ENCODE measurements at regions of chr5 and their contacts with region 1.

Region 1: GRCh38 chr5:102778478-102778877 is 23.4 kb downstream of the PAM start:
- DNase-seq: no peak
- ATAC-seq: no peak
- H3K4me3 ChIP-seq: no peak overlapping the region
- H3K4me3 Mint-ChIP-seq: no peak overlapping the region
- H3K27ac ChIP-seq: no peak overlapping the region
- H3K27ac Mint-ChIP-seq: no peak overlapping the region
- H3K4me1 ChIP-seq: peaks cover 9% of the 10 kb centered on the region
- H3K4me1 Mint-ChIP-seq: peaks cover 22% of the 10 kb centered on the region
- H3K27me3 ChIP-seq: no peaks in the 10 kb centered on the region
- H3K27me3 Mint-ChIP-seq: no peaks in the 10 kb centered on the region
- CTCF ChIP-seq: no peak

Region 2: DNA sequence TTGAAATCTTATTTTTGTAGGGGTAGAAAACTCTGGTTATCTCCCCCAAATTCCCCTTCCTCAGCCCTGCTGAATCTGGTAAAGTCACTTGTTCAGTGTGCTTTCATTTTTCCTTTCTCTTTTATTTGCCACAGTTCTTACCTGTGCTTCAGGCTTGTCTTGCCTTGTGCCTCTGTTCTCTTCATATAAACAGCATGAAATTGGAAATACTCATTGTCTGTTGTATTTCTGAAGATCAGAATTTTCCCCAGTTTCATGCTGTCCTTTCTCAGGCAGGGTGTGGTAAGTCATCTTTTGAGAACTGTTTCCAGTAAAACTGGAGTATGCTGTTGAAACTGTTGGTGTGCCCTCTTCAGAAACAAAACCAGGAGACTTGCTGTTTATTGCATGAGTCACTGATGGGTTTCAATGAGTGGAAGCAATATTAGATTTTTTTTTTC is 16.4 kb before region 1 on chr5:
- CTCF ChIA-PET with region 1: interaction called, 9 read pairs
- POLR2A ChIA-PET with region 1: interaction called, 3 read pairs
- intact Hi-C with region 1: loop called in 1 of 2 experiments (anchors 2 kb)
- DNase-seq: peak in 1 of 9 experiments; percentile 50
- ATAC-seq: no peak
- H3K4me3 ChIP-seq: peak overlapping the region in 1 of 2 experiments; percentile 1
- H3K4me3 Mint-ChIP-seq: peak overlapping the region; percentile 63
- H3K27ac ChIP-seq: peak overlapping the region in 1 of 2 experiments; percentile 45
- H3K27ac Mint-ChIP-seq: peak overlapping the region; percentile 10
- H3K4me1 ChIP-seq: peaks cover 14% of the 10 kb centered on the region
- H3K4me1 Mint-ChIP-seq: peaks cover 69% of the 10 kb centered on the region
- H3K27me3 ChIP-seq: no peaks in the 10 kb centered on the region
- H3K27me3 Mint-ChIP-seq: no peaks in the 10 kb centered on the region
- CTCF ChIP-seq: no peak

Region 3: GRCh38 chr5:102799017-102799416 is 20.5 kb after region 1 on chr5:
- CTCF ChIA-PET with region 1: interaction called, 12 read pairs
- POLR2A ChIA-PET with region 1: no interaction called
- intact Hi-C with region 1: no loop called
- DNase-seq: no peak
- ATAC-seq: no peak
- H3K4me3 ChIP-seq: no peak overlapping the region
- H3K4me3 Mint-ChIP-seq: no peak overlapping the region
- H3K27ac ChIP-seq: no peak overlapping the region
- H3K27ac Mint-ChIP-seq: no peak overlapping the region
- H3K4me1 ChIP-seq: peaks cover 19% of the 10 kb centered on the region
- H3K4me1 Mint-ChIP-seq: peaks cover 50% of the 10 kb centered on the region
- H3K27me3 ChIP-seq: no peaks in the 10 kb centered on the region
- H3K27me3 Mint-ChIP-seq: no peaks in the 10 kb centered on the region
- CTCF ChIP-seq: no peak

Region 4: DNA sequence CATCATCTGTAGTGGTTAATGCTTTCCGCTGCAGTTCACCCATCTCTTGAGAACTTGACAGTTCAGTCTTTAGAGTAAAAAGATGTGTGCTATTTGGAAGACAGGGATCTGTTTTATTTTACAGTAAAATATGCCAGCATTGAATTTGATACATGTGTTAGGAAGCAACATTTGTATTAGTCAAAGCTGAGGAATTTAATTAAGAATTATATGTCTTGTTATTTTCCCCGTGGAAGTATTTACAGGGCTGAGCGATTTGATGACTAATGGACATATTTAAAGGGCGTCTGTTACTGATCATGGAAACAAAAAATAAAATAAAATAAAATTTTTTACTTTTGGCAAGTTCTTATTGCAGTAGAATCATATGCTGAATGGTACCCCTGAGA is 77.9 kb after region 1 on chr5:
- CTCF ChIA-PET with region 1: no interaction called
- POLR2A ChIA-PET with region 1: no interaction called
- intact Hi-C with region 1: no loop called
- DNase-seq: no peak
- ATAC-seq: no peak
- H3K4me3 ChIP-seq: no peak overlapping the region
- H3K4me3 Mint-ChIP-seq: no peak overlapping the region
- H3K27ac ChIP-seq: peak overlapping the region in 1 of 2 experiments; percentile 54
- H3K27ac Mint-ChIP-seq: no peak overlapping the region
- H3K4me1 ChIP-seq: peaks cover 8% of the 10 kb centered on the region
- H3K4me1 Mint-ChIP-seq: peaks cover 26% of the 10 kb centered on the region
- H3K27me3 ChIP-seq: no peaks in the 10 kb centered on the region
- H3K27me3 Mint-ChIP-seq: no peaks in the 10 kb centered on the region
- CTCF ChIP-seq: no peak

Region 5: GRCh38 chr5:102971697-102972293 is 193.3 kb after region 1 on chr5:
- CTCF ChIA-PET with region 1: interaction called, 10 read pairs
- POLR2A ChIA-PET with region 1: no interaction called
- intact Hi-C with region 1: loop called (anchors 2 to 5 kb)
- DNase-seq: peak in 2 of 9 experiments; percentile 22 to 40
- ATAC-seq: no peak
- H3K4me3 ChIP-seq: no peak overlapping the region
- H3K4me3 Mint-ChIP-seq: no peak overlapping the region
- H3K27ac ChIP-seq: no peak overlapping the region
- H3K27ac Mint-ChIP-seq: no peak overlapping the region
- H3K4me1 ChIP-seq: no peaks in the 10 kb centered on the region
- H3K4me1 Mint-ChIP-seq: no peaks in the 10 kb centered on the region
- H3K27me3 ChIP-seq: no peaks in the 10 kb centered on the region
- H3K27me3 Mint-ChIP-seq: no peaks in the 10 kb centered on the region
- CTCF ChIP-seq: no peak

Region 6: DNA sequence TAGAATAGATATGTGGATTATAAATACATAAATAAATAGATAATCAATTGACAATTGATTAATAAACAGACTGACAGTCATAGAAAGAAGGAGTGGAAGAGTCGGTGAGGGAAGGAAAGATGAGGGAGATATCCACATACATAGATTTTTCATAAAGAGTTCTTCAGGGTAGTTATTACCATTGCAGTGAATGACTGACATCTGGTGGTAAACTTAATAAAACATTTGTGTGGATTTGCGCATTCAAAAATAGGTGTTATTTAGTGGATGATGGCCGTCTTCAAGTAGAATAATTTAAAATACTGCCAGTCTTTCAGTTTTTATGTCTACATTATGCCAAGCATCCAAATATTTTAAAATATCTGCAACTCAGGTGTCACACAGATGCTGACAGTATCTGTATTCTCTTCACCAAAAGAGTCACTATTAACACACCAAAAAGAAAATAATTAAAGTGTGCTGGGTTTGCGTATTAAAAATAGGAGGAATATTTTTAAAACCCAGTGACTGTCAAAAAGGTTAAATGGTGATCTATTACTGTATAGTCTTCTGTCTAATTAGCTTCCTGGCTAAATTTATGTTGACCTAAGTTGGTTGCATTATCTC is 262.7 kb after region 1 on chr5:
- CTCF ChIA-PET with region 1: interaction called, 3 read pairs
- POLR2A ChIA-PET with region 1: no interaction called
- intact Hi-C with region 1: loop called (anchors 2 kb)
- DNase-seq: peak in 2 of 9 experiments; percentile 44 to 58
- ATAC-seq: no peak
- H3K4me3 ChIP-seq: no peak overlapping the region
- H3K4me3 Mint-ChIP-seq: no peak overlapping the region
- H3K27ac ChIP-seq: no peak overlapping the region
- H3K27ac Mint-ChIP-seq: no peak overlapping the region
- H3K4me1 ChIP-seq: no peaks in the 10 kb centered on the region
- H3K4me1 Mint-ChIP-seq: no peaks in the 10 kb centered on the region
- H3K27me3 ChIP-seq: no peaks in the 10 kb centered on the region
- H3K27me3 Mint-ChIP-seq: peaks cover 2% of the 10 kb centered on the region
- CTCF ChIP-seq: peak; percentile 49

Region 7: GRCh38 chr5:103119765-103120606 is 341.5 kb after region 1 on chr5 and contains the starts of genes GIN1 and PPIP5K2:
- CTCF ChIA-PET with region 1: no interaction called
- POLR2A ChIA-PET with region 1: no interaction called
- intact Hi-C with region 1: loop called in 1 of 2 experiments (anchors 5 kb)
- DNase-seq: peak; percentile 96 to 98 (median 97)
- ATAC-seq: peak; percentile 90
- H3K4me3 ChIP-seq: peak within 1 kb of the TSS; percentile 77 to 83
- H3K4me3 Mint-ChIP-seq: peak within 1 kb of the TSS; percentile 94
- H3K27ac ChIP-seq: peak within 1 kb of the TSS; percentile 85 to 94
- H3K27ac Mint-ChIP-seq: peak within 1 kb of the TSS; percentile 98
- H3K4me1 ChIP-seq: peaks cover 33% of the 10 kb centered on the region
- H3K4me1 Mint-ChIP-seq: peaks cover 53% of the 10 kb centered on the region
- H3K27me3 ChIP-seq: no peaks in the 10 kb centered on the region
- H3K27me3 Mint-ChIP-seq: no peaks in the 10 kb centered on the region
- CTCF ChIP-seq: no peak
- total RNA-seq, gene GIN1: 1.5 to 1.6 TPM
- total RNA-seq, gene PPIP5K2: 43.4 to 51.1 TPM